A673 (cell line): ENCODE measurements at regions of chr6 and their contacts with region 1.

Region 1: DNA sequence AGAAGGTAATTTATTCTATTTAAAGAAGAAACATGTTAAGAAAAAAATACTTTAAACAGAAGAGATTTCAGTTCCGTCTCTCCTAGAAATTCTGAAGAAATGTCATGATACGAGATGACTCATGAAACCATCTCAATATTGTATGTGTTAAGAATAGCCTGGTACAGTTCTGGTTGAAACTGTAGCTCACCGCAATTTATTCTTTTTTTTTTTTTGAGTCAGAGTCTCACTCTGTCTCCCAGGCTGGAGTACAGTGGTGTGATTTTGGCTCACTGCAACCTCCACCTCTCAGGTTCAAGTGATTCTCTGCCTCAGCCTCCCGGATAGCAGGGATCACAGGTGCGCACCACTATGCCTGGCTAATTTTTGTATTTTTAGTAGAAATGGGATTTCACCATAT is 103.3 kb downstream of the ARHGAP18 start:
- DNase-seq: no peak
- H3K4me3 ChIP-seq: no peak overlapping the region
- H3K27ac ChIP-seq: no peak overlapping the region
- H3K4me1 ChIP-seq: peaks cover 53% of the 10 kb centered on the region
- H3K27me3 ChIP-seq: no peaks in the 10 kb centered on the region
- CTCF ChIP-seq: no peak

Region 2: GRCh38 chr6:129651291-129651691 is 44.6 kb after region 1 on chr6:
- CTCF ChIA-PET with region 1: no interaction called
- POLR2A ChIA-PET with region 1: no interaction called
- intact Hi-C with region 1: loop called (anchors 5 kb)
- DNase-seq: no peak
- H3K4me3 ChIP-seq: no peak overlapping the region
- H3K27ac ChIP-seq: no peak overlapping the region
- H3K4me1 ChIP-seq: peaks cover 10% of the 10 kb centered on the region
- H3K27me3 ChIP-seq: no peaks in the 10 kb centered on the region
- CTCF ChIP-seq: no peak

Region 3: GRCh38 chr6:129730477-129731165 is 124.0 kb after region 1 on chr6:
- CTCF ChIA-PET with region 1: no interaction called
- POLR2A ChIA-PET with region 1: no interaction called
- intact Hi-C with region 1: no loop called
- DNase-seq: peak; percentile 35
- H3K4me3 ChIP-seq: no peak overlapping the region
- H3K27ac ChIP-seq: no peak overlapping the region
- H3K4me1 ChIP-seq: no peaks in the 10 kb centered on the region
- H3K27me3 ChIP-seq: no peaks in the 10 kb centered on the region
- CTCF ChIP-seq: peak; percentile 58